Left ventricle myocardium inferior (tissue), 1 donor: ENCODE measurements at regions of chr6 and their contacts with region 1.

Region 1: GRCh38 chr6:42166444-42167141 is 6.6 kb upstream of the GUCA1A start:
- DNase-seq: peak; percentile 44
- H3K4me3 ChIP-seq: no peak overlapping the region
- H3K27ac ChIP-seq: no peak overlapping the region
- H3K4me1 ChIP-seq: no peaks in the 10 kb centered on the region
- H3K27me3 ChIP-seq: no peaks in the 10 kb centered on the region
- CTCF ChIP-seq: peak; percentile 96

Region 2: GRCh38 chr6:41581381-41581991 is 585.1 kb before region 1 on chr6:
- intact Hi-C with region 1: no loop called
- DNase-seq: no peak
- H3K4me3 ChIP-seq: no peak overlapping the region
- H3K27ac ChIP-seq: peak overlapping the region; percentile 44
- H3K4me1 ChIP-seq: peaks cover 69% of the 10 kb centered on the region
- H3K27me3 ChIP-seq: no peaks in the 10 kb centered on the region
- CTCF ChIP-seq: no peak

Region 3: DNA sequence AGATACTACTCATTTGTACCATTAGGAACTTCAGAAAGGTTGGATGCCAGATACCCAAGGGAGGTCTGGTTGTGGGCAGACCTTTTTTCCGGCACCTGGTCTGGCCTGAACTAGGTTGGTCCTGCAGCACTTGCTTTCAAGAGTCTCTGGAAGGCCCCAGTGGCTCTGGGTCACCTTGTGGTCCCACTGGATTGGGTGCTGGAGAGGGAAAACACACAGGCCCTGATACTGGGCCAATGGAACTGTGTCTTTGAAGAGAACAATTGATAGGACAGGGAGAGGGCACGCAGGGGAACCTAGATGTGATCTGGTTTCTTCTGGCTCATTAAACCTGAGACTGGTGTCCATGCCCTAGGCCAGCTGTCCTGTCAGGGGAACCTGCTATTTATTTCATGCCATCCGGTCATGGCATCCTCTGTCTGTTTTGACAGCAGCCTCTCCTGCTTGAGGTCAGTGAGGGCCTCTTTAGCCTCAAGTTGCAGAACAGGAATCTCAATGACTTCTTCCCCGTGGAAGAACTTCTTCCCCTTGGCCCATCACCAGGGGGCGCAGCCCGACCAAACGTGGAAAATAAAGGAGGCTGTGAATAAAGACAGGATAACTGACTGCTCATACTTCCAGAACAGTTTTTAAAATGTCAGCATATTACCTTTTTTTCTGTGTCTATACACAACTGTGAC is 91.3 kb before region 1 on chr6:
- intact Hi-C with region 1: loop called (anchors 2 kb)
- DNase-seq: peak; percentile 78
- H3K4me3 ChIP-seq: no peak overlapping the region
- H3K27ac ChIP-seq: peak overlapping the region; percentile 70
- H3K4me1 ChIP-seq: peaks cover 43% of the 10 kb centered on the region
- H3K27me3 ChIP-seq: no peaks in the 10 kb centered on the region
- CTCF ChIP-seq: peak; percentile 82